Caki2 (cell line): ENCODE measurements at regions of chr1 and their contacts with region 1.

Region 1: GRCh38 chr1:158124999-158125398 is 55.7 kb upstream of the CD1D start:
- DNase-seq: peak; percentile 88

Region 2: GRCh38 chr1:157963713-157964112 is 161.3 kb before region 1 on chr1:
- in situ Hi-C with region 1: loop called (anchors 10 kb)
- DNase-seq: peak; percentile 66